Left ventricle myocardium superior (tissue), 1 donor: ENCODE measurements at regions of chr5 and their contacts with region 1.

Region 1: DNA sequence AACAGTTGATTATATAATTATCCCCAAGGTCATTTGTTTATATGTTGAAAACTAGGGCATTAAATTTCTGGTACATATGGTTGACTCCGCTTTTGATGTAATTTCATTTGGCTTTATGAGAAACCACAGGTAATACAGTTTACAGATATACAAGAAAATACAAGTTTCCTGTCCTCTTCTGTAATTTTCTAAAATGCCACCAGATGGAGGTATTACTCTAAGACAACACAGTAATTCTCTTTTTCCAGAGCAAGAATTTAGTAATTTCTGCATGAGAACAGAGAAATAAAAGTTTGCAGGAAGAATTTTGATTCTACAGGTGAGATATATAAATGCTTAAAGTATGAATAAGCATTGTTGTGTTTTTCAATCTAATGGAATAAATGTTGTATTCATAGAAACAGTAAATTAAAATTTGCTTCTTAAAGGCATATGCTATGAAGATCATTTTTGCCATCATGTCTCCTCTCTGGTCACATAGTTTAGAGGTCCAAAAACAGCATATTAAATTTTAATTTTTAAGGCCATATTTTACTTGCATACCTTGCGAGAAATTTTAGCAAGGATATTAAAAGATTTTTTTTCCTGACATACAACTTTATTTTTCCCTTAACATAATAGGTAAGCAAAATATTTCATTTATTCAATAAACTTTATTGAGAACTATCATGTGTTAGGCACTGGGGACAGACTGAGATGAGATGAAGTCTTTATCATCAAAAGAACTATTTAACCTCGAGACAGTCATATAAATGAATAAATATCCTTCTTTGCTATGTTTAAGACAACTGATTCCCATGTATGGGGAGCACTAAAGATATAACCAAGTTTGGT is 22.7 kb downstream of the CHD1 start:
- DNase-seq: no peak
- ATAC-seq: peak; percentile 32

Region 2: GRCh38 chr5:98839469-98840383 is 66.3 kb before region 1 on chr5:
- intact Hi-C with region 1: no loop called
- DNase-seq: peak; percentile 28
- ATAC-seq: peak; percentile 48

Region 3: DNA sequence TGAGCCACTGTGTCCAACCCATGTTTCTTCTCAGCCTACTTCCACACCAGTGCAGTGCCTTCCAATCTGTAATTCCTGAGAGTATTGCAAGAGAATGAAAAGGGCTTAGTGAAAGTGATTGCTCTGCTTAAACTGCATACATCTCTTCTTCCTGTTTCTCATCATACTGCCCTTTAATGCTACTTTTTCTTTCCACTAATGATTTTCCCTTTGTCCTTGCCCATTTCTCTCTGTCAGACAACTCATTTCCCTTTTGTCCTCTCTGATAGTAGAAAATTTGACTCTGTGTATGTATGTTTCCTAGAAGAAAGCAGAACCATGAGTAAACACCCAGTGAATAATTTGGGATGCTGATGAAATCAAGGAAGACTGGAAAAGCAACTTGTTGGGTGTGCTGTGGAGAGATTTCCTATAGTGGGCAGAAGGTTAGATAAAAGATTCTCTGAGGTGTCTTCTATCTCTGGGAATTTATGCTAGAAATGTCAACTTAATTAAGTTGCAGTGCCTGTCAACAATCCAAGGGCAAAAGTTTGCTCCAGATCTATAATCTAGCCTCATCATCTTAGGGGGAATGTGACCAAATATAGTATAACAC is 124.9 kb after region 1 on chr5:
- intact Hi-C with region 1: loop called (anchors 2 kb)
- DNase-seq: no peak
- ATAC-seq: no peak